ENCODE measurements at regions of chr2 and their contacts with region 1.

Region 1: DNA sequence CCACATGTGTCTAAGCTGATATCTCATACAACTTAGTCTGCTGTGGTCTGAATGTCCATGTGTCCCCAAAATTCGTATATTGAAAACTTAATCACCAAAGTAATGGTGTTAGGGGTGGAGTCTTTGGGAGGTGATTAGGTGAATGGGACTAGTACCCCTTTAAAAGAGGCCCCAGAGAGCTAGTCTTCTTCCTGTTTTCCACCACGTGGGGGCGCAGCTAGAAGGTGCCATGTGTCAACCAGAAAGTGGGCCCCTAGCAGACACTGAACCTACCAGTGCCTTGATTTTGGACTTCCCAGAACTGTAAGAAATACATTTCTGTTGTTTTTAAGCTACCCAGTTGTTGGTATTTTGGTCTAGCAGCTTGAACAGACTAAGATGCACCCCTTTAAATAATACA is 86.6 kb downstream of the ASB1 start:
- DNase-seq: peak; percentile 59
- ATAC-seq: no peak
- H3K4me3 Mint-ChIP-seq: no peak overlapping the region
- H3K27ac Mint-ChIP-seq: no peak overlapping the region
- H3K4me1 Mint-ChIP-seq: peaks cover 7% of the 10 kb centered on the region
- H3K27me3 Mint-ChIP-seq: peaks cover 11% of the 10 kb centered on the region

Region 2: DNA sequence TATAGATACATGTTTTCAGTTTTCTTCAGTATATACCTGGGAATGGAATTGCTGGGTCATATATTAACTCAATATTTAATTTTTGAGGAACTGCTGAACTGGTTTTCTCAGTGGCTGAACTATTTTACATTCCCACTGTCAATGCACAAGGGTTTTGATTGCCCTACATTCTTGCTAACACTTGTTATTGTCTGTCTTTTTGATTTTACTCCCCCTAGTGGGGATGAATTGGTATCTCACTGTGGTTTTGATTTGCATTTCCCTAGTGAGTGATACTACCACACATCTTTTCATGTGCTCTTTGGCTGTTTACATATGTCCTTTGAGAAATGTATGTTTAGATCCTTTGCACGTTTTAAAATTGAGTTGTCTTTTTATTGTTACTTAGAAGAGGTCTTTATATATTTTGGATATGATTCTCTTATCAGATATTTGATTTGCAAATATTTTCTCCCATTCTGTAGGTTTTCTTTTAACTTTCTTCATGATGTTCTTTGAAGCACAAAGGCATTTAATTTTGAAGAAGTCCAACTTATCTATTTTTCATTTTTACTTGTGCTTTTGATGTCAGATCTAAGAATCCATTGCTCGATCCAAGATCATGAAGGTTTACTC is 50.5 kb before region 1 on chr2:
- CTCF ChIA-PET with region 1: no interaction called
- POLR2A ChIA-PET with region 1: no interaction called
- DNase-seq: peak; percentile 20
- ATAC-seq: peak; percentile 71
- H3K4me3 Mint-ChIP-seq: no peak overlapping the region
- H3K27ac Mint-ChIP-seq: no peak overlapping the region
- H3K4me1 Mint-ChIP-seq: peaks cover 3% of the 10 kb centered on the region
- H3K27me3 Mint-ChIP-seq: peaks cover 1% of the 10 kb centered on the region

Region 3: GRCh38 chr2:238493880-238494572 is 19.3 kb before region 1 on chr2:
- CTCF ChIA-PET with region 1: interaction called, 10 read pairs
- POLR2A ChIA-PET with region 1: no interaction called
- DNase-seq: peak; percentile 62
- ATAC-seq: peak; percentile 89
- H3K4me3 Mint-ChIP-seq: peak overlapping the region; percentile 38
- H3K27ac Mint-ChIP-seq: peak overlapping the region; percentile 89
- H3K4me1 Mint-ChIP-seq: peaks cover 44% of the 10 kb centered on the region
- H3K27me3 Mint-ChIP-seq: no peaks in the 10 kb centered on the region

Region 4: GRCh38 chr2:238784671-238785527 is 271.6 kb after region 1 on chr2:
- CTCF ChIA-PET with region 1: interaction called, 11 read pairs
- POLR2A ChIA-PET with region 1: no interaction called
- DNase-seq: peak; percentile 68
- ATAC-seq: peak; percentile 51
- H3K4me3 Mint-ChIP-seq: no peak overlapping the region
- H3K27ac Mint-ChIP-seq: no peak overlapping the region
- H3K4me1 Mint-ChIP-seq: no peaks in the 10 kb centered on the region
- H3K27me3 Mint-ChIP-seq: no peaks in the 10 kb centered on the region